Tibial artery (tissue), 4 donors: ENCODE measurements at regions of chr22 and their contacts with region 1.

Region 1: GRCh38 chr22:29267858-29268417 is at the starts of genes EWSR1 and RHBDD3:
- DNase-seq: peak; percentile 95 to 98
- H3K4me3 ChIP-seq: peak within 1 kb of the TSS; percentile 90 to 95
- H3K27ac ChIP-seq: peak within 1 kb of the TSS; percentile 98 to 99
- H3K4me1 ChIP-seq: peaks cover 0 to 49% (median 32%) of the 10 kb centered on the region in 4 donors
- H3K27me3 ChIP-seq: no peaks in the 10 kb centered on the region
- CTCF ChIP-seq: no peak

Region 2: GRCh38 chr22:28882878-28883656 is 384.9 kb before region 1 on chr22 and contains the start of gene ZNRF3:
- intact Hi-C with region 1: loop called (anchors 10 kb)
- DNase-seq: peak; percentile 90 to 94
- H3K4me3 ChIP-seq: peak within 1 kb of the TSS; percentile 60 to 65
- H3K27ac ChIP-seq: peak within 1 kb of the TSS; percentile 63 to 73
- H3K4me1 ChIP-seq: peaks cover 0 to 31% (median 17%) of the 10 kb centered on the region in 4 donors
- H3K27me3 ChIP-seq: no peaks in the 10 kb centered on the region
- CTCF ChIP-seq: no peak

Region 3: DNA sequence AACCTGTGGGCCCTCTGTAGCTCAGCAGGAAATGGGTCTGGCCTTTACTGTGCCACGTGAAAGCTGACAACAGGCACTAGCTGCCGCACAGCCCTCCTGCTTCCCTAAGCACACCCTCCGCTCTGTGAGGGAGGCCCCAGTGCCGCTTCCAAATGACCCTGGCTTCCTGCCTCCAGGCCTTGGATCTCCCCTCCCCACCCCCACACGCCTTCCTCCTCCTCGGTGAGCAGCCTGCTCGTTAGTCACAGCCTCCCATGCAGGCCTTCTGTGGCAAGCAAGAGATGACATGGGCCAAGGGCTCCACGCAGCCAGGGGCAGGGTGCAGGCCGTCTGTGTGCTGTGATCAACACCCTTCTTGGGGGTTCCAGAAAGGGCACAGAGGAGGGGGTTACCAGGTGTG is 62.8 kb after region 1 on chr22:
- intact Hi-C with region 1: no loop called
- DNase-seq: no peak
- H3K4me3 ChIP-seq: no peak overlapping the region
- H3K27ac ChIP-seq: no peak overlapping the region
- H3K4me1 ChIP-seq: peaks cover 0 to 10% (median 0%) of the 10 kb centered on the region in 4 donors
- H3K27me3 ChIP-seq: no peaks in the 10 kb centered on the region
- CTCF ChIP-seq: no peak